CD8-positive, alpha-beta T cell (primary cell): ENCODE measurements at regions of chr20 and their contacts with region 1.

Region 1: DNA sequence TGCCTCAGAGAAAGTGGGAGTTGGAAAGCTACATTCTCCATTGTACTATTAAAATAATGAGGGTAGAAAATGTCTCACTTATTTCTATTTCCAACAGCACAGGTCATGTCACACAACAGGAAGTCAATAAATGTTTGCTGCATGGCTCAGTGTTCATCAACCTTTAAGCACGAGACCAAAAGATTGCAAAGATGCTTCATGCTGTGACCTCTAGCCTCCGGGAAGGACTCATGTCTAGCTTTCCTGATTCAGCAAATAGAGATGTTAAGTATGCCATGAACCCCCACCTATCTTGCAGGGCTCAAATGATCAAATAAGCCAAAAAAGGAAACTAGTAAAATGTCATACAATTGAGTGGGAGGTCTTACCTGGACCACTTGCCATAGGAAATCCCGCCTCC is 57.4 kb downstream of the NCOA6 start:
- DNase-seq: no peak
- ATAC-seq: no peak
- H3K4me3 ChIP-seq: no peak overlapping the region
- H3K4me3 Mint-ChIP-seq: no peak overlapping the region
- H3K27ac ChIP-seq: no peak overlapping the region
- H3K27ac Mint-ChIP-seq: no peak overlapping the region
- H3K4me1 ChIP-seq: no peaks in the 10 kb centered on the region
- H3K4me1 Mint-ChIP-seq: no peaks in the 10 kb centered on the region
- H3K27me3 ChIP-seq: no peaks in the 10 kb centered on the region
- H3K27me3 Mint-ChIP-seq: no peaks in the 10 kb centered on the region
- CTCF ChIP-seq: no peak

Region 2: GRCh38 chr20:34190679-34191090 is 577.4 kb before region 1 on chr20:
- CTCF ChIA-PET with region 1: no interaction called
- POLR2A ChIA-PET with region 1: no interaction called
- intact Hi-C with region 1: loop called in 1 of 2 experiments (anchors 10 kb)
- DNase-seq: peak in 5 of 9 experiments; percentile 20 to 49 (median 34)
- ATAC-seq: no peak
- H3K4me3 ChIP-seq: no peak overlapping the region
- H3K4me3 Mint-ChIP-seq: no peak overlapping the region
- H3K27ac ChIP-seq: no peak overlapping the region
- H3K27ac Mint-ChIP-seq: no peak overlapping the region
- H3K4me1 ChIP-seq: no peaks in the 10 kb centered on the region
- H3K4me1 Mint-ChIP-seq: no peaks in the 10 kb centered on the region
- H3K27me3 ChIP-seq: no peaks in the 10 kb centered on the region
- H3K27me3 Mint-ChIP-seq: peaks cover 10% of the 10 kb centered on the region
- CTCF ChIP-seq: no peak

Region 3: DNA sequence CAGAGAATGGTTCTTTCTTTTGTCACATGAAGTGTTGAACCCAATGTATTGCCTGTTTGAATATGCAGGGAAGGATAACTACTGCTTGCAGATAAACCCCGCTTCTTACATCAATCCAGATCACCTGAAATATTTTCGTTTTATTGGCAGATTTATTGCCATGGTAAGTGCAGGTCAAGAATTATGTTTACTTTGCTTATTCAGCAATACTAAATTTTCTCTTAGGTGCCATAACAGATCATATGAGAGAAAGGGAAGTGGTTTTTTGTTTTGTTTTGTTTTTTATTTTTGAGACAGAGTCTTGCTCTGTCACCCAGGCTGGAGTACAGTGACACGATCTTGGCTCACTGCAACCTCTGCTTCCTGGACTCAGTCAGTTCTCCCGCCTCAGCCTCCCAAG is 288.5 kb before region 1 on chr20:
- CTCF ChIA-PET with region 1: no interaction called
- POLR2A ChIA-PET with region 1: no interaction called
- intact Hi-C with region 1: no loop called
- DNase-seq: no peak
- ATAC-seq: no peak
- H3K4me3 ChIP-seq: no peak overlapping the region
- H3K4me3 Mint-ChIP-seq: no peak overlapping the region
- H3K27ac ChIP-seq: no peak overlapping the region
- H3K27ac Mint-ChIP-seq: no peak overlapping the region
- H3K4me1 ChIP-seq: no peaks in the 10 kb centered on the region
- H3K4me1 Mint-ChIP-seq: peaks cover 10% of the 10 kb centered on the region
- H3K27me3 ChIP-seq: no peaks in the 10 kb centered on the region
- H3K27me3 Mint-ChIP-seq: no peaks in the 10 kb centered on the region
- CTCF ChIP-seq: no peak

Region 4: DNA sequence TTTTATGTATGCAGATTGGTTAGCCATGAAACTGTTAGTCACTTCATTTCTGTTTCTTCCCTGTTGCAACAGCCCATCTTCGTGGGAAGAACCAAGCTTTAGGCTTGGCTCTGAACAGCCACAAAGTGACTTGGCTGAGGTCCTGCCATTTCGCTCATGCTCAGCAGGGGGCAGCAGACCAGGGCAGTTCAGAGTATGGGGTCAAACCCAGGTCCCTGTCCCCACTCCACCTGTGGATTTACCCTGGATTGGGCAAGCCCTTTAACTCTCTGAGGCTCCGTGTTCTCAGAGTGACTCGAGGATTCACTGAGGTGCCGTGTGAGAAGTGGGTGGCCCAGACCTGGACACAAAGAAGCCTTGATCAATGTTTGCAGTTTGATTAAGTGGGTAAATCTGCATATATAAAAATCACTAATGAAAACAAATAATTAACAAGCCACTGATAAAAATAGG is 229.4 kb before region 1 on chr20:
- CTCF ChIA-PET with region 1: interaction called, 9 read pairs
- POLR2A ChIA-PET with region 1: no interaction called
- intact Hi-C with region 1: loop called (anchors 1 kb)
- DNase-seq: peak in 8 of 9 experiments; percentile 15 to 65 (median 56)
- ATAC-seq: peak; percentile 67
- H3K4me3 ChIP-seq: no peak overlapping the region
- H3K4me3 Mint-ChIP-seq: no peak overlapping the region
- H3K27ac ChIP-seq: no peak overlapping the region
- H3K27ac Mint-ChIP-seq: no peak overlapping the region
- H3K4me1 ChIP-seq: no peaks in the 10 kb centered on the region
- H3K4me1 Mint-ChIP-seq: peaks cover 12% of the 10 kb centered on the region
- H3K27me3 ChIP-seq: no peaks in the 10 kb centered on the region
- H3K27me3 Mint-ChIP-seq: no peaks in the 10 kb centered on the region
- CTCF ChIP-seq: peak; percentile 83

Region 5: GRCh38 chr20:34624629-34625028 is 143.5 kb before region 1 on chr20:
- CTCF ChIA-PET with region 1: no interaction called
- POLR2A ChIA-PET with region 1: no interaction called
- intact Hi-C with region 1: no loop called
- DNase-seq: no peak
- ATAC-seq: no peak
- H3K4me3 ChIP-seq: no peak overlapping the region
- H3K4me3 Mint-ChIP-seq: no peak overlapping the region
- H3K27ac ChIP-seq: no peak overlapping the region
- H3K27ac Mint-ChIP-seq: no peak overlapping the region
- H3K4me1 ChIP-seq: no peaks in the 10 kb centered on the region
- H3K4me1 Mint-ChIP-seq: no peaks in the 10 kb centered on the region
- H3K27me3 ChIP-seq: no peaks in the 10 kb centered on the region
- H3K27me3 Mint-ChIP-seq: no peaks in the 10 kb centered on the region
- CTCF ChIP-seq: no peak

Region 6: GRCh38 chr20:34753706-34754461 is 14.2 kb before region 1 on chr20:
- CTCF ChIA-PET with region 1: interaction called, 31 read pairs
- POLR2A ChIA-PET with region 1: no interaction called
- intact Hi-C with region 1: no loop called
- DNase-seq: no peak
- ATAC-seq: no peak
- H3K4me3 ChIP-seq: no peak overlapping the region
- H3K4me3 Mint-ChIP-seq: no peak overlapping the region
- H3K27ac ChIP-seq: no peak overlapping the region
- H3K27ac Mint-ChIP-seq: no peak overlapping the region
- H3K4me1 ChIP-seq: no peaks in the 10 kb centered on the region
- H3K4me1 Mint-ChIP-seq: no peaks in the 10 kb centered on the region
- H3K27me3 ChIP-seq: no peaks in the 10 kb centered on the region
- H3K27me3 Mint-ChIP-seq: no peaks in the 10 kb centered on the region
- CTCF ChIP-seq: no peak